ENCODE measurements at regions of chr12 and their contacts with region 1.

Region 1: DNA sequence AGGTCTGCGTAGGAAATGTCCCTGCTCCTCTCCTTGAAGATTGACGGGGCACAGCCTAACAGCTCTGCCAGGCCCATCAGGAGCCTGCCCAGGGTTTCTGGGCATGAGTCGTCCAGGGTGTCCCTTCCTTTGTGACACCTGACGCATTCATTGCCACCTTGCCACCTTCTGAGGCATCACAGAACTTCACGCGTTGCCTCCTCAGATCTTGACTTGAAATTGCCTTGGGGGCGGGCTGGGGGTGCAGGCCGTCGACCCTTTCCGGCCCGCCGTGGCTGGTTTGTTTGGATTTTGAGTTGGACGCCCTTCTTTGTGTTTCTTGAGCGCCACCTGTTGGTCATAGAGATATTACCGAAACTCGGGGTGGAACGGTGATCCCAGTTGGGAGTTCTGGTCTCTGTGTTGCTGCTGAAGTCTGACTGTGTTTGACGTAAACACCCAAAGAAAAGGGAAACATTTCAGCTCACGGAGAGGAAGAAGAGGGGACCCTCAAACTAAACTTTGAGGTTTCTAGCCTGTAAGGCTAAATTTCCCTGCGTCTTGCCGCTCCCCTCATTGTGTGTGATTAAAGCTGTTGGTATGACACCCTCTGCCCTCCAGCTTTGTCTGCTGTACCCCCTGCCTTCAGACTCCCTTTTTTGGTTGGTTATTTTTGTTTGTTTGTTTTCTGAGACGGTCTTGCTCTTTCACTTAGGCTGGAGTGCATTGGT is 44.6 kb downstream of the MLXIP start:
- DNase-seq: peak; percentile 74 to 84 (median 77)
- ATAC-seq: peak; percentile 89
- H3K4me3 ChIP-seq: no peak overlapping the region
- H3K27ac ChIP-seq: peak overlapping the region; percentile 59; the same call in 2 of the 3 replicates
- H3K4me1 ChIP-seq: peaks cover 9 to 19% of the 10 kb centered on the region in 2 experiments; a peak in 4 of 5 replicates
- H3K27me3 ChIP-seq: no peaks in the 10 kb centered on the region
- CTCF ChIP-seq: peak; percentile 82 to 85 (median 85)
- EP300 ChIP-seq: no peak
- POLR2A ChIP-seq: no peak
- RAD21 ChIP-seq: peak; percentile 83 to 89

Region 2: DNA sequence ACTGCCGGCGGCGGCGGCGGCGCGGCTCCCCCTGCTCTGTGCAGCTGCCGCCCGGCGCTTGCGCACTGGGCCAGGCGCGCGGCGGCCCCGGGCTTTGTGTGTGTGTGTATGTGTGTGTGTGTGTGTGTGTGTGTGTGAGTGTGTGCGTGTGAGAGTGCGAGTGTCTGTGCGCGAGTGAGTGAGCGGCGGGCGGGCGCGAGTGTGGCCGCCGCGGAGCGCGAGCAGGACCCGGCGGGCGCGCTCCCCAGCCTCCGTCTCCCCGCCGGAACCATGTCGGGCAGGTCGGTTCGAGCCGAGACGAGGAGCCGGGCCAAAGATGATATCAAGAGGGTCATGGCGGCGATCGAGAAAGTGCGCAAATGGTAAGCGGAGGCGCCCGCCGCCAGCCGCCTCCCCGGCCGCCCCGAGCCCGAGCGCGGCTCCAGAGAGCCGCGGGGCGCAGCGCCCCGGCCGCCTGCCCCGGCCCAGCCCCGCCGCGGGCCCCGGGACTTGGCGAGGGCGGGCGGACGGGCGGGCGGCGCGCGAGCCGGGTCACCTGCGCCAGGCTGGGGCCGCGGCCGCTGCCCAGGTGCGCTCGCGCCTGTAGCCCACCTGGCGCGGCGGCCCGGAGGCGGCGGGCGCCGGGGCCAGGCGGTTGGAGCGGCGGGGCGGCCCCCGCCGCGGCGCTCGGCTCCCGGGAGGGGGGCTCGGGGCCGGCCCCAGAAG is 101.2 kb before region 1 on chr12 and contains the start of gene BCL7A:
- CTCF ChIA-PET with region 1: no interaction called
- POLR2A ChIA-PET with region 1: no interaction called
- in situ Hi-C with region 1: no loop called
- intact Hi-C with region 1: no loop called
- DNase-seq: peak; percentile 77 to 87 (median 82)
- ATAC-seq: peak; percentile 74
- H3K4me3 ChIP-seq: peak within 1 kb of the TSS; percentile 73
- H3K27ac ChIP-seq: peak within 1 kb of the TSS; percentile 93
- H3K4me1 ChIP-seq: peaks cover 17 to 41% of the 10 kb centered on the region in 2 experiments
- H3K27me3 ChIP-seq: no peaks in the 10 kb centered on the region; a peak in 1 of 5 replicates
- CTCF ChIP-seq: no peak
- EP300 ChIP-seq: no peak
- POLR2A ChIP-seq: peak; percentile 75
- RAD21 ChIP-seq: no peak
- polyA plus RNA-seq, gene BCL7A: 0.25 to 0.30 TPM

Region 3: DNA sequence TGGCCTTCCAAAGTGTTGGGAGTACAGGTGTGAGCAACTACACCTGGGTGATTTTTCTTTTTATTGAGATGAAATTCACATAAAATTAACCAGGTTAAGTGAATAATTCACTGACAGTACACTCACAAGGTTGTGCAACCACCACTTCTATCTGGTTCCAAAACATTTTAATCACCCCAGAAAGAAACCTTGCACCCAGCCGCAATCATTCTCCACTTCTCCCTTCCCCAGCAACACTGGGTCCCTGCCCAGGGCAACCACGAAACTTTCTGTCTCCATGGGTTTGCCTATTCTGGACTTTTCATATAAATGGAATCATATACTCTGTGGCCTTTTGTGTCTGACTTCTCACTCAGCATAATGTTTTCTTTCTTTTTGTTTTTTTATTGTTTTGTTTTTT is 70.9 kb before region 1 on chr12:
- CTCF ChIA-PET with region 1: interaction called, 76 read pairs
- POLR2A ChIA-PET with region 1: no interaction called
- in situ Hi-C with region 1: loop called (anchors 5 kb)
- intact Hi-C with region 1: loop called (anchors 1 kb)
- DNase-seq: no peak
- ATAC-seq: no peak
- H3K4me3 ChIP-seq: no peak overlapping the region
- H3K27ac ChIP-seq: no peak overlapping the region
- H3K4me1 ChIP-seq: peaks cover 0 to 14% of the 10 kb centered on the region in 2 experiments; a peak in 3 of 5 replicates
- H3K27me3 ChIP-seq: no peaks in the 10 kb centered on the region
- CTCF ChIP-seq: no peak
- EP300 ChIP-seq: no peak
- POLR2A ChIP-seq: no peak
- RAD21 ChIP-seq: no peak

Region 4: DNA sequence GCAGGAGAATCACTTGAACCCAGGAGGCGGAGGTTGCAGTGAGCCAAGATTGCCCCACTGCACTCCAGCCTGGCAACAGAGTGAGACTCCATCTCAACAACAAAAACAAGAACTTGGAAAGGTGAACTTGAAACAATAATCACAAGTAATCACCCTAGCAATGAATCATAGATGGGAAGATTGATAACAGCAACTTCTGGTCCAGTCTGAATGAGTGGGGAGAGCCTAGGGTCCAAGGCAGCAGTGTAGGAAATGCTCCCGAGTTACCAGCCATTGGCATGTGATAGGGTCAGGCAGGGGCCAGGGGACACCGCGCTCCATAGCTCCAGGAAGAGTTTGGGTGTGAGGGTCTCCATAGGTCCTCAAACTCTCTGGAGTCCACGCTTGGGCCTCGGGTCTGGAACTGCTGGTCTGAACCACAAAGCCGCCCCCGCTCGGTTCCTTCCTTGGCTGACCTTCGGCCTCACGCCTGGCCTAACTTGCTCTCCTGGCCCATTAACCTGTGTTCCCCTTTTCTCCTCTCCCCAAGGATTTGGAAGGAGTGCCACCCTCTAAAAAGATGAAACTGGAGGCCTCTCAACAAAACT is 64.5 kb before region 1 on chr12:
- CTCF ChIA-PET with region 1: interaction called, 76 read pairs
- POLR2A ChIA-PET with region 1: interaction called, 7 read pairs
- in situ Hi-C with region 1: loop called (anchors 5 kb)
- intact Hi-C with region 1: loop called (anchors 1 kb)
- DNase-seq: no peak
- ATAC-seq: no peak
- H3K4me3 ChIP-seq: no peak overlapping the region
- H3K27ac ChIP-seq: no peak overlapping the region
- H3K4me1 ChIP-seq: peaks cover 18 to 33% of the 10 kb centered on the region in 2 experiments
- H3K27me3 ChIP-seq: no peaks in the 10 kb centered on the region
- CTCF ChIP-seq: no peak
- EP300 ChIP-seq: no peak
- POLR2A ChIP-seq: no peak
- RAD21 ChIP-seq: no peak

Region 5: DNA sequence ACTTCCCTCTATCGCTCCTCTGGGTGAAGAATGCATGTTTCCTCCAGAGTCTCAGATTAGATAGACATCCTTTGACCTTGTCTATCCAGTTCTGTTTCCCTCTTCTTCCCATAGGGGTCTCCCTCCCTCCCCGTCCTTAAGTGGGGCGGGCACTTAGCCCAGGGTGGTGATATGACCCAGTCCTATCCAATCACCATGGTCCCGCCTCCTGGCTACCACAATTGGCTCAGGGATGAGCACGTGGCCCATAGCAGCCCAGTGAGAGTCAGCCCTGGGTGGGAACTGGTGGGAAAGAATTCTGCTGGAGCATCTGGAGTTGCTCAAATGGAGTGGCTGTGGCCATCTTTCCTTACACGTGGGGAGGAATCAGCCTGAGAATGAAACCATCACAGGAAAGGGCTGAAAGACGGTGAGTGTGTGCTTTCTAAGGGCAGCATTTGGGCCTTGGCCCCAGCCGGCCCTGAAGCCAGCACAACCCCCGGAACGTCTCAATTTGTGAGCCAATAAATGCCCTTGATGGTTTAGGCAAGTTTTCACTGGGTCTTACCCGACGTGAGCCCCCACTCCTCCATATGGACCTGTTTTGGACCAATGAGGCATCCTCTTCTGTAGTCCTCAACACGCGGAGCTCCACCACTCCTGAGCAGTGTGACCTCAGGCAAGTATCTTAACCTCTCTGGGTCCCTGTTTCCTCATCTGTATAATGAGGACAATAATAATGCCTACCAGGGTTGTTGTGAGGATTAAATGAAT is 59.0 kb before region 1 on chr12:
- CTCF ChIA-PET with region 1: interaction called, 3 read pairs
- POLR2A ChIA-PET with region 1: interaction called, 7 read pairs
- in situ Hi-C with region 1: loop called (anchors 5 kb)
- intact Hi-C with region 1: loop called (anchors 1 kb)
- DNase-seq: peak; percentile 96 to 99 (median 98)
- ATAC-seq: peak; percentile 97
- H3K4me3 ChIP-seq: peak overlapping the region; percentile 44
- H3K27ac ChIP-seq: peak overlapping the region; percentile 94
- H3K4me1 ChIP-seq: peaks cover 45 to 54% of the 10 kb centered on the region in 2 experiments
- H3K27me3 ChIP-seq: no peaks in the 10 kb centered on the region
- CTCF ChIP-seq: peak; percentile 71 to 88 (median 82)
- EP300 ChIP-seq: peak; percentile 50
- POLR2A ChIP-seq: peak; percentile 81
- RAD21 ChIP-seq: peak; percentile 44 to 62

Region 6: DNA sequence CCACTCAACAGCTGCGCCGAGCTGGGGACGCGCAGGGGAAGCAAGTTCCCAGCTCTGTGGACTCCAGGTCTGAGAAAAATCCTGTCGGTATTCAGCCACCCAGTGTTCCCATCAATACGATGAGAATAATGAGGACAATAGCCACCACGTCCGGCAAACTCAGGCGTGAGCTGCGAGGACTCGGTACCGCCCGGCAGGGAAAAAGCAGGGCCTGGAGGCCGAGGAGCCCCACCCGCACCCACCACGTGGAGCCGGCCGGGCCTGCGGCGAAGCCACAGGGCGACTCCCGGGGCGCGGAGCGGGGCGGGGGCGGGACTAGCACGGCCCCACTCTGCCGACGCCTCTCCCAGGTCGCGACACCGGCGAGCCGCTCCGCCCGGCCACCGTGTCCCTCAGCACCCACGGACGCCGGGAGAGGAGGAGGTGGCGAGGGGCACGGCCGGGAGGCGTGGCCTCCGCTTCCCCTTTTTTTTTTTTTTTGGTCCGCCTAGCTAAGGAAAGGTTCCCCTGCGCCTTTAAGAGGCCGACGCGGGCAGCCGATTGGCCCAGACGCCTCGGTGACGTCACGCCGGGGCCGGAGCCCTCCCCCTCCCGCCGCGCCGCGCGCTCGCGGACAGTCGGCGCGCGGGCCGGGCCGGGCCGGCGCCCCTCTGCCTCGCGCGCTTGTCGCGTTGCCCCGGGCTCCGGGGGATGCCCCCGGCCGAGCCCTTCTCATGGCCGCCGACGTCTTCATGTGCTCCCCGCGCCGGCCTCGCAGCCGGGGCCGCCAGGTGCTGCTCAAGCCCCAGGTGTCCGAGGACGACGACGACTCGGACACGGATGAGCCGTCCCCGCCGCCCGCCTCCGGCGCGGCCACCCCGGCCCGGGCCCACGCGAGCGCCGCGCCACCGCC is 44.8 kb before region 1 on chr12 and contains the start of gene MLXIP:
- CTCF ChIA-PET with region 1: no interaction called
- POLR2A ChIA-PET with region 1: no interaction called
- in situ Hi-C with region 1: no loop called
- intact Hi-C with region 1: loop called (anchors 2 kb)
- DNase-seq: peak; percentile 94 to 97 (median 95)
- ATAC-seq: peak; percentile 81
- H3K4me3 ChIP-seq: peak within 1 kb of the TSS; percentile 74
- H3K27ac ChIP-seq: peak within 1 kb of the TSS; percentile 88
- H3K4me1 ChIP-seq: peaks cover 27 to 29% of the 10 kb centered on the region in 2 experiments; a peak in 4 of 5 replicates
- H3K27me3 ChIP-seq: no peaks in the 10 kb centered on the region
- CTCF ChIP-seq: no peak
- EP300 ChIP-seq: no peak
- POLR2A ChIP-seq: peak; percentile 63
- RAD21 ChIP-seq: peak in 1 of 2 experiments; percentile 6; a peak in 1 of 4 replicates
- polyA plus RNA-seq, gene MLXIP: 2.2 to 3.8 TPM

Measured in K562 (cell line).